CD8-positive, alpha-beta memory T cell (primary cell): ENCODE measurements at regions of chr3 and their contacts with region 1.

Region 1: DNA sequence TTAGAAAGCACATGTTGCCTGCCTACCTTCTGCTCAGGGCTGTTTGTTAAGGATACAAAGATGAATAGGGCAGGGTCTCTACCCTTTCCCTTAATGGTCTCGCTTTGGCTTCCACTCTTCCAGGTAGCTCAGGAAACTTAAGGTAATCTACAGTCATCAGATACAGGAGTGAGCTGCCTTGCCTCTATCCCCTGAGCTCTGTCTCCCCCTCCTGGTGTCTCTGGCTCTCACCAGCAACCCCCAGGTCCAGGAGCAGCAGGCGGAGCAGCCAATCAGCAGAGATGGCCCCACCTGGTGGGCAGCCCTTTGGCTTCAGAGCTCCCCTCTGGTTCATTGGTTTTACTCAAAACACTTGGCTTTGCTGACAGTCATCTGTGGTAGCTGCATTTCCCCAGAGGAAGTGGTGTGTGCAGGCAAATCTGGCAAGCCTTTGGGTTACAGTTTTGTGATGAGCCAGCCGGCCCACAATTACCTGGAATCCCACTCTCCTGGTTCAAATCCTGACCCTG is 8.5 kb upstream of the CX3CR1 start:
- DNase-seq: peak; percentile 71 to 86 (median 73)
- H3K4me3 ChIP-seq: no peak overlapping the region
- H3K4me3 Mint-ChIP-seq: no peak overlapping the region
- H3K27ac ChIP-seq: no peak overlapping the region
- H3K27ac Mint-ChIP-seq: peak overlapping the region in 7 of 8 donors; percentile 9 to 87 (median 72)
- H3K4me1 ChIP-seq: peaks cover 13% of the 10 kb centered on the region
- H3K4me1 Mint-ChIP-seq: peaks cover 17 to 45% (median 32%) of the 10 kb centered on the region in 3 donors
- H3K27me3 ChIP-seq: no peaks in the 10 kb centered on the region
- H3K27me3 Mint-ChIP-seq: peaks cover 0 to 2% of the 10 kb centered on the region in 2 donors

Region 2: GRCh38 chr3:39101022-39101689 is 187.2 kb before region 1 on chr3:
- CTCF ChIA-PET with region 1: interaction called, 24 read pairs
- POLR2A ChIA-PET with region 1: no interaction called
- DNase-seq: peak in 4 of 5 donors; percentile 29 to 66 (median 40)
- H3K4me3 ChIP-seq: no peak overlapping the region
- H3K4me3 Mint-ChIP-seq: peak overlapping the region in 1 of 7 donors; percentile 35
- H3K27ac ChIP-seq: no peak overlapping the region
- H3K27ac Mint-ChIP-seq: peak overlapping the region in 4 of 8 donors; percentile 23 to 92 (median 62)
- H3K4me1 ChIP-seq: peaks cover 10% of the 10 kb centered on the region
- H3K4me1 Mint-ChIP-seq: peaks cover 30 to 43% (median 36%) of the 10 kb centered on the region in 3 donors
- H3K27me3 ChIP-seq: no peaks in the 10 kb centered on the region
- H3K27me3 Mint-ChIP-seq: no peaks in the 10 kb centered on the region

Region 3: DNA sequence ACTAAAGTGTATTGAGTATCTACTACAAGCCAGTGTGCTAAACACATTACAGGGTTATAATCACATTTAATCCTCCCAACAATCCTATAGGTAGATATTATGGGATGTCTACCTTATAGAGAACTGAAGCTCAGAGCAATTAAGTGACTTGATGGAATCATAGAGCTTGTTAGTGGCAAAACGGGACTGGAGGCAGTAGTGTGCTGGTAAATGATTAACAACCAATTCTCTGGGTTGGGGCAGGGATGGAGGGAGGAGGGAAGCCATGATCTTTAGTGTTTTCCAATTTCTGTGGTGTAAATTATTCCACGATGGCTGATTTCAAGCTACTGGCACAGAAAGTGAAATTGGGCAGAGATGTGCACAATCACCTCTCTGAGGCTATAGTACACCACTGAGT is 116.5 kb before region 1 on chr3:
- CTCF ChIA-PET with region 1: interaction called, 11 read pairs
- POLR2A ChIA-PET with region 1: no interaction called
- DNase-seq: no peak
- H3K4me3 ChIP-seq: no peak overlapping the region
- H3K4me3 Mint-ChIP-seq: peak overlapping the region in 1 of 7 donors; percentile 18
- H3K27ac ChIP-seq: no peak overlapping the region
- H3K27ac Mint-ChIP-seq: peak overlapping the region in 2 of 8 donors; percentile 1 to 49
- H3K4me1 ChIP-seq: no peaks in the 10 kb centered on the region
- H3K4me1 Mint-ChIP-seq: peaks cover 0 to 2% (median 0%) of the 10 kb centered on the region in 3 donors
- H3K27me3 ChIP-seq: no peaks in the 10 kb centered on the region
- H3K27me3 Mint-ChIP-seq: no peaks in the 10 kb centered on the region

Region 4: DNA sequence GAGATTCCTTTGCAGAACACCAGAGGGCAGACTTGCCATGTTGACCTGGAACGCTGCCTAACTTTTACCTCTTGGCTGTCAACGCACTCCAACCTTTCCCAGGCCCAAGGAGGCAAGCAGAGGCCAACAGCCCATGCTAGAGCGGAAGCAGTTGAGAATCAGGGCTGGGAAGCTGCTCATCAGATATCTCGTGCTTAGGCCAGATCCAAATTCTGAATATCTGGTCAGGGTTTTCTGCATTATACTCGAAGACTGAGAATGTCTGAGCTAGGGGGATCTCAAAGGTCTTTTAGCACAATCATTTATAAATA is 98.4 kb before region 1 on chr3:
- CTCF ChIA-PET with region 1: interaction called, 253 read pairs
- POLR2A ChIA-PET with region 1: no interaction called
- DNase-seq: peak; percentile 31 to 64 (median 48)
- H3K4me3 ChIP-seq: no peak overlapping the region
- H3K4me3 Mint-ChIP-seq: no peak overlapping the region
- H3K27ac ChIP-seq: no peak overlapping the region
- H3K27ac Mint-ChIP-seq: peak overlapping the region in 4 of 8 donors; percentile 3 to 80 (median 60)
- H3K4me1 ChIP-seq: no peaks in the 10 kb centered on the region
- H3K4me1 Mint-ChIP-seq: peaks cover 4 to 7% (median 5%) of the 10 kb centered on the region in 3 donors
- H3K27me3 ChIP-seq: no peaks in the 10 kb centered on the region
- H3K27me3 Mint-ChIP-seq: no peaks in the 10 kb centered on the region

Region 5: GRCh38 chr3:39216176-39216790 is 72.1 kb before region 1 on chr3:
- CTCF ChIA-PET with region 1: interaction called, 28 read pairs
- POLR2A ChIA-PET with region 1: no interaction called
- DNase-seq: no peak
- H3K4me3 ChIP-seq: no peak overlapping the region
- H3K4me3 Mint-ChIP-seq: peak overlapping the region in 1 of 7 donors; percentile 16
- H3K27ac ChIP-seq: no peak overlapping the region
- H3K27ac Mint-ChIP-seq: peak overlapping the region in 5 of 8 donors; percentile 6 to 92 (median 14)
- H3K4me1 ChIP-seq: peaks cover 4% of the 10 kb centered on the region
- H3K4me1 Mint-ChIP-seq: peaks cover 18 to 27% (median 19%) of the 10 kb centered on the region in 3 donors
- H3K27me3 ChIP-seq: no peaks in the 10 kb centered on the region
- H3K27me3 Mint-ChIP-seq: peaks cover 0 to 2% of the 10 kb centered on the region in 2 donors

Region 6: GRCh38 chr3:39378088-39378487 is 89.7 kb after region 1 on chr3:
- CTCF ChIA-PET with region 1: interaction called, 18 read pairs
- POLR2A ChIA-PET with region 1: no interaction called
- DNase-seq: peak; percentile 18 to 70 (median 41)
- H3K4me3 ChIP-seq: no peak overlapping the region
- H3K4me3 Mint-ChIP-seq: peak overlapping the region in 1 of 7 donors; percentile 57
- H3K27ac ChIP-seq: no peak overlapping the region
- H3K27ac Mint-ChIP-seq: peak overlapping the region in 2 of 8 donors; percentile 19 to 63
- H3K4me1 ChIP-seq: peaks cover 11% of the 10 kb centered on the region
- H3K4me1 Mint-ChIP-seq: peaks cover 10 to 21% (median 18%) of the 10 kb centered on the region in 3 donors
- H3K27me3 ChIP-seq: peaks cover 5% of the 10 kb centered on the region
- H3K27me3 Mint-ChIP-seq: peaks cover 6 to 7% of the 10 kb centered on the region in 2 donors